ENCODE measurements at regions of chr4 and their contacts with region 1.

Region 1: DNA sequence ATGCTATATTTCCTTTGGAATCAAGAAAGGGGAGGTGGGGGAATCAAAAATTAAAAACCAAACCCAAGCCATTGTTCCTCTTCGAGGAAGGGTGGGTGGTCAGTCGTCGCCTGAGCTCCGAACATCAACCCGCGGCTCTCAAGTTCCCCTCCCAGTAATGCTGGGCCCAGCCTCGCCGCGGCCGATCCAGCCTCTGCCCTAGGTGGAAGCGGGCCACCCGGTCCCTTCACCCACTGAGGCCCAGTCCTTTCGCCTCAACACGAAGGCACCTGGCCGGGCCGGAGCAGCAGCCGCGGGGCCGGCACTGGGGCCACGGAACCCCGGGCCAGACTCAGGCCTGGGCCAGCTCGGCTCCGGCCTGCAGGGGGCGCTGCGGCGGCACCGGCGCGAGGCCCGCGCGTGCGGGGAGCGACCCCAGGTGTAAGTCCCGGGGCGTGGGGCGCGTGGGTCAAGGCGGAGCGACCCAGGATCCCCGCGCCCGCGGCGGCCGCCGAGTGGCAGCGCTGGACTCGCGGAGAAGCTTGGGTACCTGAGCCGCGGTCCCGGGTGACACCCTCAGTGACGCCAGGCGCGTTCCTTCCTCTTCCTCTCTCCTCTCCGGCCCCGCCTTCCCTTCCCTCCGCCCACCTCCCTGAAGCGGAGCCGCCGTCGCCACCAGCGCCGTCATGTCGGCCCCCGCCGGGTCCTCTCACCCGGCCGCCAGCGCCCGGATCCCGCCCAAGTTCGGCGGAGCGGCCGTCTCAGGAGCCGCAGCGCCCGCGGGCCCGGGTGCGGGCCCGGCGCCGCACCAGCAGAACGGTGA is at the start of gene SEC24B:
- DNase-seq: peak; percentile 96 to 98 (median 96)
- ATAC-seq: peak; percentile 87 to 95 (median 88)
- H3K4me3 ChIP-seq: peak within 1 kb of the TSS; percentile 66 to 74 (median 69)
- H3K27ac ChIP-seq: peak within 1 kb of the TSS; percentile 88 to 97 (median 91)
- H3K4me1 ChIP-seq: peaks cover 0 to 36% (median 9%) of the 10 kb centered on the region in 4 donors
- H3K27me3 ChIP-seq: no peaks in the 10 kb centered on the region
- CTCF ChIP-seq: peak; percentile 87 to 97 (median 94)
- POLR2A ChIP-seq: peak; percentile 85
- total RNA-seq, gene SEC24B: 22.1 to 55.0 (median 27.1) TPM

Region 2: DNA sequence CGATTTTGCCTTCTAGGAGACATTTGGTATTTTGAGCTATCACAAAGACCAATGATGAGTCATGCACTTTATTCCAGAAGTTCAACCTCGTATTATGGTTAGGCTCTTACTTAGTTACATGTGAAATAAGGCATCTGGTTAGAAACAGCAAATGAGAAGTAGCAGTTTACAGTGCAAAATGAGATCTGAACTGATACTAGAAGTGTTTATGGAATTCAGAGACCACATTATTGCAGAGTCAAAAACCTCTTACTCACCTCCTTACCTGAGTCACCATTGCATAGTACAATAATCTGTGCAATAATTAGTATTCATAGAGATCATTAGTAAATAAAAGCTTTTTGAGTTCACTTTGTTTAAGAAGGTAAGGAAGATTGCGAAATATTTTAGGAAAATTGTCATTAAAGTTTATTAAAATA is 38.9 kb after region 1 on chr4:
- intact Hi-C with region 1: no loop called
- DNase-seq: no peak
- ATAC-seq: peak in 3 of 4 donors; percentile 18 to 65 (median 36)
- H3K4me3 ChIP-seq: no peak overlapping the region
- H3K27ac ChIP-seq: no peak overlapping the region
- H3K4me1 ChIP-seq: peaks cover 0 to 4% (median 0%) of the 10 kb centered on the region in 4 donors
- H3K27me3 ChIP-seq: no peaks in the 10 kb centered on the region
- CTCF ChIP-seq: no peak
- POLR2A ChIP-seq: no peak

Region 3: GRCh38 chr4:109511414-109511813 is 78.0 kb after region 1 on chr4:
- intact Hi-C with region 1: loop called in 1 of 2 experiments (anchors 10 kb)
- DNase-seq: no peak
- ATAC-seq: peak in 2 of 4 donors; percentile 32 to 53
- H3K4me3 ChIP-seq: no peak overlapping the region
- H3K27ac ChIP-seq: peak overlapping the region in 2 of 3 donors; percentile 13 to 52
- H3K4me1 ChIP-seq: peaks cover 0 to 45% (median 11%) of the 10 kb centered on the region in 4 donors
- H3K27me3 ChIP-seq: no peaks in the 10 kb centered on the region
- CTCF ChIP-seq: no peak
- POLR2A ChIP-seq: no peak

Region 4: DNA sequence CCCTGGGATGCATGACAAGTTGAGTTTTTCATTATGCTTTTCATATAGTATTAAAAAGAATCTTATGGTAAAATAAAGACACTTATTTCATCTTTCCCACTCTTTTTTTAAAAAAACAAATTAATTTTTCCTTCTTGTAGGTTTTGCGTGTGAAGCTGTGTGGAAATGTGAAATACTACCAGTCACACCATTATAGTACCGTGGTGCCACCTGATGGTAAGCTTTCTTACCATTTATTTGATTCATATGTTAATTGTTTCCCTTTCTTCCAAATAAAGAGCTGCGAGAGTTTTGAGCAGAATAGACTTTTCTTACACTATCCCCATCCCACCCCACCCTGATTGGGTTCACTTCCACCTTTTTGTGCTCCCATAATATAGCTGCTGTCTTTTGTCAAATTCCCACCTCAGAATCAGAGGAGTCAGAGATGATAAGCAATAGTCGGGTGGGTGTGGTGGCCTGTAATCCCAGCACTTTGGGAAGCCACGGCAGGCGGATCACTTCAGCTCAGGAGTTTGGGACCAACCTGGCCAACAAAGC is 225.5 kb after region 1 on chr4:
- intact Hi-C with region 1: loop called (anchors 5 to 10 kb)
- DNase-seq: no peak
- ATAC-seq: peak; percentile 46 to 52 (median 52)
- H3K4me3 ChIP-seq: no peak overlapping the region
- H3K27ac ChIP-seq: no peak overlapping the region
- H3K4me1 ChIP-seq: no peaks in the 10 kb centered on the region
- H3K27me3 ChIP-seq: no peaks in the 10 kb centered on the region
- CTCF ChIP-seq: peak; percentile 21 to 42 (median 34)
- POLR2A ChIP-seq: no peak

Measured in right lobe of liver (tissue), 6 donors.